ENCODE measurements at regions of chr6 and their contacts with region 1.

Region 1: DNA sequence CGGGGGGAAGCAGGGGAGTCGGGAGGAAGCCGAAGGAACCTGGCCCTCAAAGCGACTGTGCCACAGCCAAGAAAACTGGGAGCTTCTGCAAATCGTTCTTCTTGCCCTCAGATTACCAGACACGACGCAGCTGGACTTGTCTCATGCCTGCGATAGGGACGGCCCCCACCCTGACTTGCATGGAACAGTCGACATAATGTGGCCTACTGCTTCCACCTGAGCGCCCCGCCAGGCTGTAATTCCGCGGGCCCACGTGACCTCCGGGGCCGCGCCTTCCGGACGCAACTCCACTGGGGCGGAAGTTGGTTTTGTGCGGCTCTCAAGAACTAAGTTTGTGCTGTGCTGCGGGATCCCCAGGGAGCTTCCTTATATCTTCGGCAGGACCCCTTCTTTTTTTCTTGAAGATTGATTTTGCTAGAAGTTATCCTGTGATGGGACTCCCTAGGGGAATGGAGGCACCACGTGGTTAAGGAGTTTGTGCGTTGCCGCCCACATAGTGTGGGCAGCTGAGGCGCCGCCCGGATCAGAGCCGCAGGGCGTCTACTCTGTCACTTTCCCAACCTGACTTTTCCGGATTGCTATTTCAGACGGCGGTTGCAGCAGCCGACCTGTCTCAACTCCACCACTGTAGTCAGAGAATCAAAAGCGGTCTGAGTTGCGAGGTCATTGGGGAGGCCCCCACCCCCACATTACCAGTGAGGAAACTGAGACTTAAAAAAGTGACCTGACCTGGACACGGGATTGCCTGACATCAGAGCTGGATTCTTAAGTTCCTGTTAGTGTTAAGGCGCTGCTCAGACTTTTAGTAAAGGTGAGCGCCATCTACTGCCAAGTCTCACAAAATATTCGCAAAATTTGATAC is 540 bp upstream of the CD164 start:
- DNase-seq: peak; percentile 95 to 97 (median 96)
- H3K4me3 ChIP-seq: peak overlapping the region; percentile 77 to 96
- H3K4me3 Mint-ChIP-seq: peak overlapping the region; percentile 89 to 98 (median 98)
- H3K27ac ChIP-seq: peak overlapping the region; percentile 97
- H3K27ac Mint-ChIP-seq: peak overlapping the region; percentile 99 to 100 (median 99)
- H3K4me1 ChIP-seq: peaks cover 37% of the 10 kb centered on the region
- H3K4me1 Mint-ChIP-seq: peaks cover 27 to 54% (median 39%) of the 10 kb centered on the region in 4 donors
- H3K27me3 ChIP-seq: no peaks in the 10 kb centered on the region
- H3K27me3 Mint-ChIP-seq: no peaks in the 10 kb centered on the region

Region 2: DNA sequence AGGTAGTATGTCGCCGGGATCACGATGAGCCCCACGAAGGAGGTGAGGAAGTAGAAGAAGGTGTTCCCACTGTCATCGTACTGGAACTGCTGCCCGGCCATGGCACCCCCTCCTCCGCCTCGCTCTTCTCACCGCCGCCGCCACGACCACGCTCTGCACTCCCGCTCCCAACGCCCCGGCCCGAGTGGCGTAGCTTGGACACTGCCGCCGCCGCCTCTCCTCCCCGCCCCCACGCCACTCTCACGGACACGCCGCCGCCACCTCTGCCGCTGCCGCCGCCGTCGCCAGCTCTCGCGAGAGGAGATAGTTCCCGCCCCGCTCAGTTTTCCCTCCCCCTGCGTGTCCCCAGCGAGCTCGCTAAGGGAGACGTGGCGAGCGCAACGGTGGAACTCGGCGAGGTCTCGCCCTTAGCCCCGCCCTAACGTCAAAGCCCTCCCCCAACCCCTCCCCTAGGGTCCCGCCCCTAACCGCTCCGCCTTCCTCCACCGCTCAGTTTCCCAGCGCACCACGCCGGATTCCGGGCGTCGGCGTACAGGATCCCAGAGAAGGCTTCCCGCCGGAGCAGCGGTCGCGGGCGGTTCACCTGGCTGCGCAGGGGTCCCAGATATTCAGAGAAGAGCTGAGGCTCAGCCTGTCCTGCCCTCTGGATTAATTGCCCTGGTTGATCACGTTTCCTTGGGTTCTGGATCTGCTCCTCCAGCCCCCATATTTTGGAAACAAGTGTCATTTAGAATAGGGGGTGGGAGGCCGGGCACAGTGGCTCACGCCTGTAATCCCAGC is 1424.7 kb before region 1 on chr6 and contains the start of gene SEC63:
- CTCF ChIA-PET with region 1: no interaction called
- POLR2A ChIA-PET with region 1: interaction called, 4 read pairs
- intact Hi-C with region 1: loop called (anchors 1 kb)
- DNase-seq: peak; percentile 95 to 96 (median 96)
- H3K4me3 ChIP-seq: peak within 1 kb of the TSS; percentile 55 to 80
- H3K4me3 Mint-ChIP-seq: peak within 1 kb of the TSS; percentile 92 to 100 (median 98)
- H3K27ac ChIP-seq: peak within 1 kb of the TSS; percentile 86
- H3K27ac Mint-ChIP-seq: peak within 1 kb of the TSS; percentile 92 to 98 (median 97)
- H3K4me1 ChIP-seq: peaks cover 29% of the 10 kb centered on the region
- H3K4me1 Mint-ChIP-seq: peaks cover 18 to 39% (median 29%) of the 10 kb centered on the region in 4 donors
- H3K27me3 ChIP-seq: no peaks in the 10 kb centered on the region
- H3K27me3 Mint-ChIP-seq: no peaks in the 10 kb centered on the region
- total RNA-seq, gene SEC63: 91.7 to 95.5 TPM

Region 3: GRCh38 chr6:108782179-108783041 is 600.4 kb before region 1 on chr6:
- CTCF ChIA-PET with region 1: no interaction called
- POLR2A ChIA-PET with region 1: no interaction called
- intact Hi-C with region 1: loop called (anchors 2 kb)
- DNase-seq: peak; percentile 69 to 74 (median 72)
- H3K4me3 ChIP-seq: peak overlapping the region in 1 of 2 donors; percentile 40
- H3K4me3 Mint-ChIP-seq: peak overlapping the region; percentile 78 to 93 (median 87)
- H3K27ac ChIP-seq: no peak overlapping the region
- H3K27ac Mint-ChIP-seq: peak overlapping the region in 5 of 7 donors; percentile 24 to 78 (median 47)
- H3K4me1 ChIP-seq: peaks cover 5% of the 10 kb centered on the region
- H3K4me1 Mint-ChIP-seq: peaks cover 4 to 11% (median 7%) of the 10 kb centered on the region in 4 donors
- H3K27me3 ChIP-seq: no peaks in the 10 kb centered on the region
- H3K27me3 Mint-ChIP-seq: no peaks in the 10 kb centered on the region

Region 4: DNA sequence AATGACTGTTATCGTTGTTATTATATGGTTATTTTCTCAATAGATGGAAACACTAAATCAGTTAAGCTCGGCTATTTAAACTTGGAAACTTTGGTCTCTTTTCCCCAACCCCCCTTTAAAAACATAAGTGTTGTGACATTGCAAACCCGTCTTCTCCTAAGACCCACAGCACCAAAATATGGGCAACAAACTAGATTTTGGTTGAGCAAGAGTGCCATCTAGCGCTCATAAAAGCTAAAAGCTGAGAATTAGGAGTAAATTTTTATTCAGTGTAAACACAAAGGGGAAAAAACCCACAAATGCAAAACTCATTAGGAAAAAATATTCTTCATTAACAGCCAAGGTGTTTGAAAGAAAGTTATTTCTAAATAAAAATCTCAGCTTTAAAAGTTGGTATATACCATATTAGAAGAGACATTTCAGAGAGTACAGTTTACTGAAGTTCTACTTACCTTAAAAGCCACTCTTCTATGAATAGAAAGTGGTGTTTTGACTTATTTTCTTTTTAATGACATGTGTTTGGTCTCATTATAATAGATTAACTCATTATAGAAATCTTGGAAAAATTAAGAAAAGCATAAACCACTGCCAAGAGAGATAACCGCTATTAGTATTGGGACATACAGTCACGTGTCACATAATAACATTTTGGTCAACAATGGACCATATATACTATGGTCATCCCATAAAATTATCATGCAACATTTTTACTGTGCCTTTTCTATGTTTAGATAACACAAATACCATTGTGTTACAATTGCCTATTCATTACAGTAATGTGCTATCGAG is 309.3 kb before region 1 on chr6:
- CTCF ChIA-PET with region 1: interaction called, 13 read pairs
- POLR2A ChIA-PET with region 1: interaction called, 6 read pairs
- intact Hi-C with region 1: no loop called
- DNase-seq: peak; percentile 67 to 74 (median 71)
- H3K4me3 ChIP-seq: no peak overlapping the region
- H3K4me3 Mint-ChIP-seq: peak overlapping the region in 6 of 8 donors; percentile 20 to 71 (median 51)
- H3K27ac ChIP-seq: no peak overlapping the region
- H3K27ac Mint-ChIP-seq: peak overlapping the region in 4 of 7 donors; percentile 1 to 72 (median 34)
- H3K4me1 ChIP-seq: peaks cover 34% of the 10 kb centered on the region
- H3K4me1 Mint-ChIP-seq: peaks cover 24 to 39% (median 34%) of the 10 kb centered on the region in 4 donors
- H3K27me3 ChIP-seq: no peaks in the 10 kb centered on the region
- H3K27me3 Mint-ChIP-seq: no peaks in the 10 kb centered on the region

Region 5: GRCh38 chr6:109308018-109308492 is 74.8 kb before region 1 on chr6:
- CTCF ChIA-PET with region 1: no interaction called
- POLR2A ChIA-PET with region 1: no interaction called
- intact Hi-C with region 1: no loop called
- DNase-seq: no peak
- H3K4me3 ChIP-seq: no peak overlapping the region
- H3K4me3 Mint-ChIP-seq: no peak overlapping the region
- H3K27ac ChIP-seq: no peak overlapping the region
- H3K27ac Mint-ChIP-seq: no peak overlapping the region
- H3K4me1 ChIP-seq: no peaks in the 10 kb centered on the region
- H3K4me1 Mint-ChIP-seq: no peaks in the 10 kb centered on the region
- H3K27me3 ChIP-seq: no peaks in the 10 kb centered on the region
- H3K27me3 Mint-ChIP-seq: no peaks in the 10 kb centered on the region

Region 6: DNA sequence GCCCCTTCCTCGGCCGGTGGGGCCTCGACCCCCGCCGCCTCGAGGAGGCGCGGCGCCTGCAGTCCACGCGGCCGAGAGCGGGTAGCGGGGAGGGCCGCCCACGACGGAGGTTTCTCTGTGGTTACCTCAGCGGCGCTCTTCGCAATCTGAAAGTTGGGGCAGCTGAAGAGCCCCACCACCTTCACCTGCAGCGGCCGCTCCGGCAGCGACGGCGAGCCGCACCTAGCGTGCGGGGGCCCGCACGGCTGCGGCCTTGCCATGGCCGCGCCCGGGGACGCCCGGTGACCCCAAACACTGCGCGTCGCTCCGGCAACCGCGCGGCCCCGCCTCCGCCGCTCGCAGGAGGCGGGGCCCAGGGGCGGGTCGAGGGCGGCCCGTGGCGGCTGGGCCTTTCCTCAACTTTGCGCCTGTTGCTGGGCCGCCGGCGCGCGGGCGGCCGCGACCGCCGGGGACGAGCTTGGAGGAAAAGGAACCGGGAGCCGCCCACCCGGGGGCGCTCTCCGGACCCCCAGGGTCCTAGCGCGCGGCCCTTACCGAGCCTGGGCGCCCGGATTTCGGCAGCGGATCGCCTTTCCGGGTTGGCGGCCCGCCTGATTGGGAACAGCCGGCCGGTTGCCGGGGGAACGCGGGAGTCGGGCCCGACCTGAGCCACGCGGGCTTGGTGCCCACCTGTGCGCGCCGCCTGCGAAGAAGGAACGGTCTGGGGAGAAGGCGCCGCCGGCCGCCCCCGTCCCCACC is 57.7 kb after region 1 on chr6 and contains the starts of genes PPIL6 and SMPD2:
- CTCF ChIA-PET with region 1: interaction called, 50 read pairs
- POLR2A ChIA-PET with region 1: interaction called, 117 read pairs
- intact Hi-C with region 1: loop called (anchors 1 kb)
- DNase-seq: peak; percentile 77 to 84 (median 80)
- H3K4me3 ChIP-seq: peak within 1 kb of the TSS; percentile 69 to 82
- H3K4me3 Mint-ChIP-seq: peak within 1 kb of the TSS; percentile 91 to 98 (median 94)
- H3K27ac ChIP-seq: peak within 1 kb of the TSS; percentile 89
- H3K27ac Mint-ChIP-seq: peak within 1 kb of the TSS; percentile 96 to 98 (median 97)
- H3K4me1 ChIP-seq: peaks cover 25% of the 10 kb centered on the region
- H3K4me1 Mint-ChIP-seq: peaks cover 15 to 32% (median 21%) of the 10 kb centered on the region in 4 donors
- H3K27me3 ChIP-seq: no peaks in the 10 kb centered on the region
- H3K27me3 Mint-ChIP-seq: no peaks in the 10 kb centered on the region
- total RNA-seq, gene PPIL6: 0.39 to 0.52 TPM
- total RNA-seq, gene SMPD2: 21.7 to 23.6 TPM

Region 7: GRCh38 chr6:109498052-109498451 is 115.2 kb after region 1 on chr6:
- CTCF ChIA-PET with region 1: no interaction called
- POLR2A ChIA-PET with region 1: no interaction called
- intact Hi-C with region 1: no loop called
- DNase-seq: no peak
- H3K4me3 ChIP-seq: no peak overlapping the region
- H3K4me3 Mint-ChIP-seq: no peak overlapping the region
- H3K27ac ChIP-seq: no peak overlapping the region
- H3K27ac Mint-ChIP-seq: peak overlapping the region in 1 of 7 donors; percentile 5
- H3K4me1 ChIP-seq: no peaks in the 10 kb centered on the region
- H3K4me1 Mint-ChIP-seq: peaks cover 0 to 5% (median 2%) of the 10 kb centered on the region in 4 donors
- H3K27me3 ChIP-seq: no peaks in the 10 kb centered on the region
- H3K27me3 Mint-ChIP-seq: peaks cover 0 to 4% of the 10 kb centered on the region in 2 donors

Region 8: DNA sequence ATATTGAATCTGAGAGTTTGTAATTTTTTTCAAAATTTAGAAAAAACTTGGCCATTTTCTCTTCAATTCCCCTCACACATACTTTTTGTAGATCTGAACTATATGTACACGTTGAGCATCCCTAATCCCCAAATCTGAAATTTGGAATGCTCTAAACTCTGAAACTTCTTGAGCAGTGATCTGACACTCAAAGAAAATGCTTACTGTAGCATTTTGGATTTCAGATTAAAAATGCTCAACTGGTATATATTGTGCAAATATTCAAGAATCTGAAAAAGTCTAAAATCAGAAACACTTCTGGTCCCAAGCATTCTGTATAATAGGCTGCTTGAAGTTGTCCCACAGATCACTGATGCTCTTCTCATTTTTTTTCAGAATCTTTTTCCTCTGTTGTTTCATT is 179.0 kb after region 1 on chr6:
- CTCF ChIA-PET with region 1: no interaction called
- POLR2A ChIA-PET with region 1: no interaction called
- intact Hi-C with region 1: no loop called
- DNase-seq: no peak
- H3K4me3 ChIP-seq: no peak overlapping the region
- H3K4me3 Mint-ChIP-seq: no peak overlapping the region
- H3K27ac ChIP-seq: no peak overlapping the region
- H3K27ac Mint-ChIP-seq: no peak overlapping the region
- H3K4me1 ChIP-seq: no peaks in the 10 kb centered on the region
- H3K4me1 Mint-ChIP-seq: no peaks in the 10 kb centered on the region
- H3K27me3 ChIP-seq: no peaks in the 10 kb centered on the region
- H3K27me3 Mint-ChIP-seq: no peaks in the 10 kb centered on the region

Region 9: DNA sequence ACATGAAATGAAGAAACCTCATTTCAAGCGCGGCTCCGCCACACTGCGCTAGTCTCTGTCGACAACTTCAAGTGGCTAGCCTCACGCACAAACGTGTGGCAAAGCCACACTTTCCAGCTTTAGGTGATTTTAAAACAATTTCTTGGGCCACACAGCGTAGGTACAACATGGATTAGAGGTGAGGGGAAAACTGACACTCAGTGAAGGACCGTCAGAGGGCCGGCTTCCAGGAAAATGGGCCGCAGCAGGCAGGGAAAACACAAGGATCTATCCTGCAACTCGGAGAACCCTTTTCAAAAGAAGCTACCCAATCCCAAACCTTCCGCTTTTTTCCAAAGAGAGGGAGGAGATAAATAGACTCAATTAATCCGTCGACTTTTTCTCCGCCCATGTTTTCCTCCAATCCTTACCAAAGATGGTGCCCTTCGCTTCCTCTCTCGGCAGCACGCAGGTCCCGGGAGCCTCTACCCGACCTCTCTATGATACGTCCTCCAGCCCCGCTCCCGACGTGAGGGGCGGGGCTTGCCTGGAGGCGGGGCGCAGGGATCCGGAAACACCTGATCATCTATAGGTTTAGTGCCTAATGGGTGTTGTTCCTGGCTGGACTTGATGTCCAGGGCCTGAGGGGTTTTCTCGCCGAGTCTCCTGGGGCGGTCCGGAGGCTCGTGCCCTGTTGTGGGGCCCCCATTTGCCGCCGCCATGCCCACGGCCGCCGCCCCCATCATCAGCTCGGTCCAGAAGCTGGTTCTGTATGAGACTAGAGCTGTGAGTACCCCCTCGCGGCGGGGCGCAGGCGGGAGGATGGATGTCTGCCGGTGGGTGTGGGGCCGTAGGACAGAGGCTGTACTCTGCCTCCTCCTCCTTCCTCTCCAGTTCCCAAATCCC is 308.2 kb after region 1 on chr6 and contains the starts of genes AK9 and FIG4:
- CTCF ChIA-PET with region 1: interaction called, 9 read pairs
- POLR2A ChIA-PET with region 1: interaction called, 24 read pairs
- intact Hi-C with region 1: loop called (anchors 1 kb)
- DNase-seq: peak; percentile 82 to 90 (median 84)
- H3K4me3 ChIP-seq: peak within 1 kb of the TSS; percentile 87 to 89
- H3K4me3 Mint-ChIP-seq: peak within 1 kb of the TSS; percentile 95 to 100 (median 99)
- H3K27ac ChIP-seq: peak within 1 kb of the TSS; percentile 74
- H3K27ac Mint-ChIP-seq: peak within 1 kb of the TSS; percentile 93 to 99 (median 97)
- H3K4me1 ChIP-seq: peaks cover 26% of the 10 kb centered on the region
- H3K4me1 Mint-ChIP-seq: peaks cover 10 to 29% (median 22%) of the 10 kb centered on the region in 4 donors
- H3K27me3 ChIP-seq: no peaks in the 10 kb centered on the region
- H3K27me3 Mint-ChIP-seq: peaks cover 0 to 2% of the 10 kb centered on the region in 2 donors
- total RNA-seq, gene AK9: 15.6 to 18.4 TPM
- total RNA-seq, gene FIG4: 14.4 to 14.8 TPM

Region 10: DNA sequence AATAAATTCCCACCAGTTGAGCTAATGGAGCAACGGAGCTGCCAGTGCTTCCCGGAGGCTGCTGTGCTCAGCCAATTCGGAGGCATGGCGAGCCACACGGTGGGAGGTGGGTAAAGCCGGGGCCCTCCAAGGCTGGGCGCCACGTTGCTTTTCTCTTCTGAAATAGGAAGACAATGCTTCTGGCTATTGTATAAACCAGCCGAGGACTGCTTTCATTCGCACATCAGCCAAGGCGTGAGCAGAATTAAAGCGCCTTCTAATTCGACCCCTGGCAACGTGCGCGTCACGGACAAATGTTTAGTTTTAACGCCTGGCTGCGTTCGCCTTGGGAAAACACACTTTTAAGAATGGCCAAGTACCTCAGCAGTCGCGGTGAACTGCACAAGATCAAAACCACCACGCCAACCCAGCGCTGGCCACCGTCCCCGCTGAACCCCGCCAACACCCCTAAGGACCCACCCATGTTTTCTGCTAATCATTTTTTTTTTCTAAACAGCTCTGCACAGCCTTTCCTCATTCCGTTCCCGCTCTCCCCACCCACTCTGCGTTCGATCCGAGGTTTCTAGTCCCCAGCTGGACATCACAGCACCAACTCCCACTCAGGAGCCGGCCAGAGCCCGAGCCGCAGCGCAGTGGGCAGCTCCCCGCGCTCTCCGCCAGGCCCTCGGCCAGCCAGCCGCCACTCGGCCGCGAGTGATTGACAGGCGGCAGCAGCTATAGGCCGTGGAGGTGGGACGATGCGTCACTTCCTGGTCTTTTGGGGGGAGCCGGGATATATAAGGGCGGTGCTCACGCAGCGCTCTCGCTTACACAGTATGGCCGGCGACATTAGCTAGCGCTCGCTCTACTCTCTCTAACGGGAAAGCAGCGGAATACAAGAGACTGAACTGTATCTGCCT is 1491.4 kb after region 1 on chr6 and contains the start of gene AMD1:
- CTCF ChIA-PET with region 1: no interaction called
- POLR2A ChIA-PET with region 1: interaction called, 8 read pairs
- intact Hi-C with region 1: loop called (anchors 2 kb)
- DNase-seq: peak; percentile 96 to 97 (median 97)
- H3K4me3 ChIP-seq: peak within 1 kb of the TSS; percentile 44 to 87
- H3K4me3 Mint-ChIP-seq: peak within 1 kb of the TSS; percentile 96 to 100 (median 99)
- H3K27ac ChIP-seq: peak within 1 kb of the TSS; percentile 87
- H3K27ac Mint-ChIP-seq: peak within 1 kb of the TSS; percentile 94 to 100 (median 99)
- H3K4me1 ChIP-seq: peaks cover 29% of the 10 kb centered on the region
- H3K4me1 Mint-ChIP-seq: peaks cover 28 to 51% (median 32%) of the 10 kb centered on the region in 4 donors
- H3K27me3 ChIP-seq: no peaks in the 10 kb centered on the region
- H3K27me3 Mint-ChIP-seq: no peaks in the 10 kb centered on the region
- total RNA-seq, gene AMD1: 62.2 to 63.1 TPM

Measured in CD4-positive, alpha-beta memory T cell (primary cell).